Activated CD4-positive, alpha-beta T cell treated with anti-CD3 and anti-CD28 coated beads, Interleukin-2, amount 10 ng/mL, durations not matched to agents 24 days and 14 days (primary cell): ENCODE measurements at regions of chr17 and their contacts with region 1.

Region 1: DNA sequence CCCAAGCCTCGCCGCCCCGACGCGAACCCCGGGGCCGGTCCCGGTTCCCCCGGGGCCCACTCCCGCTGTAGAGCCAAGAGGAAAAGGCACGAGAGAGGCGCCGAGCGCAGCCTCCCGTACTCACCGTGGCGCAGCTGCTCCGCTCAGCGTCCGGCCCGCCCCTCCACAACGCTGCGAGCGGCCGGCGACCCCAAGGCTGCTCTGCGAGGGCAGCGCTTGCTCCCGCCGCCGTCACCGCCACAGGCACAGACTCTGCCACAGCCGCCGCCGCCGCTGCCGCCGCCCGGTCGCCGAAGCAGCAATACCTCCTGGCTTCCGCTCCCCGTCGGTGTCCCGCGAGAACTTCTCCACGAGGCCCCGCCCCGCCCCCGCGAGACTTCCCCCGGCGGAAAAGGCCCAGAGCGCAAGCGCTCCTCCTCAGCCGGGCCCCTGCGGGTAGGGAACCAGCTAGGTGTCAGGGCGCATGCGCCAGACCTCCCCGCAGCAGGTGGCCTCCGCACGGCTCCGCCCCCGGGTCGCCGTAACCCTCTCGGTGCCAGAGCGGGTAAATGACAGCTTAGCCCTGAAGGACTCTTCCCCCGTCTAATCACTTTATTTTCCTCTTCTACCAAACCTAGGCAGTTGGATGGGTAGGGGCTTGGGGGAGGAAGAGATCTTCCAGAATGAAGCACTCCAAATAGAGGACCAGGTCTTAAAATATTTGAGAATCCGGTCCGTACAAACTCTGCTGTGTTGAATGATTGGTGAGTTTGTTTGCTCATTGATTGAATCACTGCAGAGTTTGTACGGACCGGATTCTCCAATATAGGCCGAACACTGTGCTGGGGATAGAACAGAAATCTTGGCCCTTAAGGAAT is at the start of gene GRB2:
- DNase-seq: peak; percentile 100
- H3K4me3 Mint-ChIP-seq: peak within 1 kb of the TSS; percentile 94
- H3K27ac Mint-ChIP-seq: peak within 1 kb of the TSS; percentile 94
- H3K4me1 Mint-ChIP-seq: peaks cover 40% of the 10 kb centered on the region
- H3K27me3 Mint-ChIP-seq: no peaks in the 10 kb centered on the region
- total RNA-seq, gene GRB2: 172 and 182 TPM in 2 replicates

Region 2: DNA sequence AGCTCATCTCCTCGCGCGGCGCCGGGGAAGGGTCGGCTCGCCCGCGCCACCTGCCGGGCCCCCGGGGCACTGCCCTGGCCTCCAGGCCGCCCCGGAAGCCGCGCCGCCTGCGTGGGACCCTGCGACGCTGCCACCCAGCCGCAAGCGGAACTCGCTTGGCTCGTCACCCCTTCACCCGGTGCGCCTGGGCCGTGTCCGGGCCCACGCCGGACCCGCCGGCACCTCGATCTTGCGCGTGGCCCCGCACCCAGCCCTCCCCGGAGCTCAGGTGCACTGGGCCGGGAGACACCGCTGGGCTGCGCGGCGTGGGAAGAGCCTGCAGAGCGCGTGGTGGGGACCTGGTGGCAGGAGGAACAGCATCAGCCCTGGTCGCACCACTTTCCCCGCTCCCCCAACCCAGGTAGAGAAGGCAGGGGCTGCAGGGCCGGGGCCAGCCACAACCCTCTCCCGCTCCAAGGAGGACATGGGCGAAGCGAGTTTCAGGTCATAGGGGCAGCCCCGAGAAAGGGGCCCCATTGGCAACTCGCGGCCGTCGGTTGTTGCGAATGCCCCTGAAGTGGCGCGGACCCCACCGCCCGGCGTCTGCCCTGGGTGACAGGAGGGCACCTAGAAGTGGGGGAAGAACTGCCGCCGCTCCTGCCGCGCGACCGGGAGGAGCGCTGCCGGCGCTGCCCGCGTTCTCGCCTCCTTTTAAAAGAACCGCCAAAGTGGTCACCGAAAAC is 134.2 kb before region 1 on chr17:
- intact Hi-C with region 1: loop called (anchors 1 kb)
- DNase-seq: peak; percentile 97
- H3K4me3 Mint-ChIP-seq: peak overlapping the region; percentile 89
- H3K27ac Mint-ChIP-seq: peak overlapping the region; percentile 87
- H3K4me1 Mint-ChIP-seq: peaks cover 32% of the 10 kb centered on the region
- H3K27me3 Mint-ChIP-seq: no peaks in the 10 kb centered on the region

Region 3: DNA sequence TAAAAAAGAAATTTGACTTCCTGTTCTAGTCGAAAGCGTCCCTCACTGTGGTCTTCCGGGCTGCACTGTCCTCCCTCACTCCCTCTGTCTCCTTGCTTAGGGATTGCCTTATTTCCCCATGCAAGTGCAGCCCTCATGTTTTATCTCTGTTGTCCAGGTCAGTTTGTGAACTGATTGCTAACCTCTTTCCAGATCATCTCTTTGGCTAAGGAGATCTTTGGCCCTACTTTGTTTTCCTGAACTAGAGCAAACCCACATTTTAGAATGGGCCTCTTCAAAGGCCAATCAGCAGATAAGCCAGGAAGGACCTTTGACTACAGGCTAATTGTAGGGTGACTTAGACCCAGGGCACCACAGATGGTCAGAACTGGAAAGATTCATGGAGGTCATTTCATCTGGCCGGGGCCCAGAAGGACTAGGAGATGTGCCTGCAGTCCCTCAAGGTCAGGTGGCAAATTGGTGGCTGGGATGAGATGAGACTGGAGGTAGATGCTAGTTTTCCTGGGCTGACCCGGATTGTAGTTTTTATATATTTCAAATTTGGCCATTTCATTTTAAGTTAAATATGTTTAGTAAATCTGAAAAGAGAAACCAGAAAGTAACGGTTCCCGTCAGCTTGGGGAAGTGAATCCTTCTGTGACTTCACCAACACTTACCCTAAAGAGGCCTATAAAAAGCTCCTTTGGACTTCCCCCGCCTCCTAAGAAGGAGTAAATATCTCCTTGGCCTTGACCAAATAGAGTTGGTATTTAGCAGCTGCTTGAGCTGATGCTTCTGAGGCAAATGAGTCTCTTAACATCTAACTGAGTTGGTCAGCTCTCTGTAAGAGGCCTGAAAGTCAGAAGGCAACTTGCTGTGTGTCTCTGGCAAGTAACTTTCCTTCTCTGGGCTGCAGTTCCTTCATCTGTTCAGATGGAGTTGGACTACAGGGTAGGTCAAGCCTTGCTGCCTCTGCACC is 110.1 kb before region 1 on chr17:
- intact Hi-C with region 1: loop called (anchors 1 kb)
- DNase-seq: peak; percentile 81
- H3K4me3 Mint-ChIP-seq: peak overlapping the region; percentile 34
- H3K27ac Mint-ChIP-seq: peak overlapping the region; percentile 86
- H3K4me1 Mint-ChIP-seq: peaks cover 23% of the 10 kb centered on the region
- H3K27me3 Mint-ChIP-seq: no peaks in the 10 kb centered on the region

Region 4: DNA sequence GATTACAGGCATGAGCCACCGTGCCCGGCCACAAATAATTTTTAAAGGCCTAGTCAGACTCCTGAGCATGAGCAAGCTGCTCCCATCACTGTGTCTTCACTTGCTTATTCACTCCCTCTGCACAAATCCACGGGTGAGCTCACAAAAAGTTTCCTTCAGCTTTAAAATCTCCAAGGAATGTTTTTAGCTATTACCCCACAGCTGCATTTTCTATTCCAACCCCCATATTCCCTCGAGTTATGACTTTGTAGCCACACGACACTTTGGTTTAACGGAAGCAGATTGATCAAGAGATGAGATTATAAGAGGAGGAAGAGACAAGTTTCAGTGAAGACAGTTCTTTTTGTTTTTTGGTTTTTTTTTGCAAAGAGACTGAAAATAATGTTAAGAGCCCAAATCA is 67.3 kb before region 1 on chr17:
- intact Hi-C with region 1: loop called (anchors 2 kb)
- DNase-seq: peak; percentile 75
- H3K4me3 Mint-ChIP-seq: peak overlapping the region; percentile 69
- H3K27ac Mint-ChIP-seq: peak overlapping the region; percentile 86
- H3K4me1 Mint-ChIP-seq: peaks cover 61% of the 10 kb centered on the region
- H3K27me3 Mint-ChIP-seq: no peaks in the 10 kb centered on the region

Region 5: DNA sequence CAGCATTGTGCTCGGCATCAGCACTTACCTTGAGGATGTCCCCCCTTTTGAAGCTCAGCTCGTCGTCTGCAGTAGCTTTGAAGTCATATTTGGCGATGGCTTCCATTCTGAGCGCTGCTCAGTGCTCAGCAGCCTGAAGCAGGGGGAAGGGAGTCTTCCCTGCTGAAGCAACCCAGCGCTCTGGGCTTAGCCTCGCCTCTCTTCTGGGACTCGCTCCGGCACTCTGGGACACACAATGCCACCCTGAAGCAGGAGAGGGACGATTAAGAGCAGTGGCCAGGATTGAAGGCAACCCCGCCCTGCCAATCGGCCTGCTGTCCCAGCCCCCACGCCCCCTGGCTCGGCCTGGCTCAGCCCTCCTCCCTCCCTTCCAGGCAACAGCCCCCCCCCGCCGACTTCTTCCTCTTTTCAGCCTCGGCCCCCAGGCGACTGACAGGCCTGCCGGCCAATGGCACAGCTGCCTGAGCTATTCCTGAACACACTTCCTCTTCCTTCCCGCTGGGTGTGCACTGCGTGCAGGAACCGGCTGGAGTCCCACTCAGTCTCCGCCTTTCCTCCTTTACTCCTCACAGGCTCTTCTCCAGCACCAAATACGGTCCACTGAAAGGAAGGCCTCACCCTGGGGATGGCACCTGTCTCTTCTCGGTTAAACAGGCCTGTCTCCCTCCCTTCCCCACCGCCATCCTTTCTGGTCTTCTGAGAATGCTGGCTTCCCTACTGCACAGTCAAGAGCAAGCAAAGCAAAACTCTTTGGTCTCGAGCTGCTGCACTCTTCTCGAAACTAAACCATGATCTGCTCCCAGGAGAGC is 11.9 kb before region 1 on chr17:
- intact Hi-C with region 1: loop called (anchors 1 kb)
- DNase-seq: peak; percentile 94
- H3K4me3 Mint-ChIP-seq: peak overlapping the region; percentile 99
- H3K27ac Mint-ChIP-seq: peak overlapping the region; percentile 90
- H3K4me1 Mint-ChIP-seq: peaks cover 68% of the 10 kb centered on the region
- H3K27me3 Mint-ChIP-seq: no peaks in the 10 kb centered on the region